Activated naive CD4-positive, alpha-beta T cell treated with anti-CD3 and anti-CD28 coated beads for 36 hours (primary cell): ENCODE measurements at regions of chr7 and their contacts with region 1.

Region 1: DNA sequence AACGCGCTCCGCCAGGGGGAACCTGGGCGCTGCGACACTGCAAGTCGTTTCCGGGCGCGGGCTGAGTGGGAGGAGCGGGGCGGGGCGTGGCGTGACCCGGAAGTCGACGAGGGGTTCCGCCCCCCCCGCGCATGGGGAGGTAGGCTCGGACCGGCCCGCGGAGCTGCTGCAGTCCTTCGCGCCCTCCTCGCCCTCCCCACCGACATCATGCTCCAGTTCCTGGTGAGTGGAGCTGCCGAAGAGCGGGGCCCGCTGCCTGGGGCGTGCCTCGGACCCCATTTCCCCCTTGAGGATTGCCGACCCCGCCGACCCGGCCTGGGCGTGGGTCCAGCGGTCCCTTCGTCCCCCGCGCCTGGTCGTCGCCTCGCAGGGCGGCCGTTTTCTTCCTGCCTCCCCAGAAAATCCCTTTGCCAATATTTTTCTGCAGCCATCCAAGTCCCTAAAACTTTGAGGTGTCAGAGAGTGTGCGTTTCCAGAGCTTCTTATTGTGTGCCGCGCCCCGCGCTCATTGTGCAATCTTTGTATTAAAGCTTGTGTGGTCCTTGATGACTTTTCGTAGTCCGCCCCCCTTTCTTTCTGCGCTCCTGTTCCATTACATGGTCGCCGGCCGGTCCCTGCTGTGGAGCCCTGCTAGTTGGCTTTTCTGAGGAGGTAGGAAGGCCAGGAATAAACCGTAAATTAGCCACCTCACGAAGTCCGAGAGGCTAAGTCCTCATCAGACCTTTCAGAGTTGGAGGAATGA is at the start of gene STMP1:
- DNase-seq: peak; percentile 97
- H3K4me3 Mint-ChIP-seq: peak within 1 kb of the TSS; percentile 98
- H3K27ac Mint-ChIP-seq: peak within 1 kb of the TSS; percentile 96
- H3K4me1 Mint-ChIP-seq: peaks cover 46% of the 10 kb centered on the region
- H3K27me3 Mint-ChIP-seq: no peaks in the 10 kb centered on the region
- total RNA-seq, gene STMP1: 21.5 to 21.6 TPM

Region 2: GRCh38 chr7:134992626-134993179 is 669.8 kb before region 1 on chr7:
- CTCF ChIA-PET with region 1: no interaction called
- intact Hi-C with region 1: loop called (anchors 10 kb)
- DNase-seq: peak; percentile 63
- H3K4me3 Mint-ChIP-seq: no peak overlapping the region
- H3K27ac Mint-ChIP-seq: peak overlapping the region; percentile 74
- H3K4me1 Mint-ChIP-seq: peaks cover 67% of the 10 kb centered on the region
- H3K27me3 Mint-ChIP-seq: no peaks in the 10 kb centered on the region

Region 3: GRCh38 chr7:135281363-135281949 is 381.1 kb before region 1 on chr7:
- CTCF ChIA-PET with region 1: no interaction called
- intact Hi-C with region 1: loop called (anchors 1 kb)
- DNase-seq: peak; percentile 93
- H3K4me3 Mint-ChIP-seq: no peak overlapping the region
- H3K27ac Mint-ChIP-seq: no peak overlapping the region
- H3K4me1 Mint-ChIP-seq: peaks cover 6% of the 10 kb centered on the region
- H3K27me3 Mint-ChIP-seq: peaks cover 5% of the 10 kb centered on the region

Region 4: GRCh38 chr7:135645296-135645904 is 17.1 kb before region 1 on chr7:
- CTCF ChIA-PET with region 1: interaction called, 29 read pairs
- intact Hi-C with region 1: no loop called
- DNase-seq: no peak
- H3K4me3 Mint-ChIP-seq: no peak overlapping the region
- H3K27ac Mint-ChIP-seq: no peak overlapping the region
- H3K4me1 Mint-ChIP-seq: no peaks in the 10 kb centered on the region
- H3K27me3 Mint-ChIP-seq: no peaks in the 10 kb centered on the region

Region 5: GRCh38 chr7:135685306-135686084 is 23.0 kb after region 1 on chr7:
- CTCF ChIA-PET with region 1: no interaction called
- intact Hi-C with region 1: no loop called
- DNase-seq: no peak
- H3K4me3 Mint-ChIP-seq: no peak overlapping the region
- H3K27ac Mint-ChIP-seq: no peak overlapping the region
- H3K4me1 Mint-ChIP-seq: peaks cover 4% of the 10 kb centered on the region
- H3K27me3 Mint-ChIP-seq: no peaks in the 10 kb centered on the region

Region 6: DNA sequence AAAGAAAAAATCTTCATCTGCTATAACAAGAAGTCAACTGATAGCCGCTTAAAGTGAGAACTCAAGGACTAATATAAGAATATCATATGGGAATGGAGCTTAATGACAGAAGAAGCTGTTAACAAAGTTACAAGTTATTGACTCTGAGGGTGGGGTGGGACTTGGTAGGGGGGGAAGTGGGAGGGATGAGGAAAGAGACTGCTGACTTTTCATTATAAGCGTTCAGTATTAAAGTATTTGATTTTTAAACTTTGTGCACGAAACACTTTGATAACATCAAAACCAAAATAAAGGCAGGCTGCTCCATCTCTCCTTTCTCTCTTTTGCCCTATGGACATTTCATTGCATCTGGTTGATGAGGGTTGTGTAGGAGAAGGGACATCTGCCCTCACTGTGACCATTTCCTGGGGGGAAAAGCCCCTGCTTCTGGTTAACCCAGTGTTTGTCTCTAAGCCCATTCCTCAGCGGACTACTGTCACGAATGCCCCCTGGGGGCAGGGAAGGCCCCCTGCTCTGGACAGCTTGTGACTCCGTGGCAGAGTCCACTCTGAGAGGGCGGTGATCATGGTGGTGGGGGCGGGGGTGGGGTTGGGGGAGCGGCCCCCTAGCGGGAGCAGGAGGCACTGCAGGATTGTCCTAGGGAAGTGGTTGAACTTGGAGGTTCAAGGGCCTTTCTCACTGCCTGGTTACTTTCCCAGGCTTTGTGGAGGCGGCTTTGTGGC is 48.0 kb after region 1 on chr7:
- CTCF ChIA-PET with region 1: no interaction called
- intact Hi-C with region 1: loop called (anchors 2 kb)
- DNase-seq: no peak
- H3K4me3 Mint-ChIP-seq: no peak overlapping the region
- H3K27ac Mint-ChIP-seq: no peak overlapping the region
- H3K4me1 Mint-ChIP-seq: no peaks in the 10 kb centered on the region
- H3K27me3 Mint-ChIP-seq: no peaks in the 10 kb centered on the region

Region 7: DNA sequence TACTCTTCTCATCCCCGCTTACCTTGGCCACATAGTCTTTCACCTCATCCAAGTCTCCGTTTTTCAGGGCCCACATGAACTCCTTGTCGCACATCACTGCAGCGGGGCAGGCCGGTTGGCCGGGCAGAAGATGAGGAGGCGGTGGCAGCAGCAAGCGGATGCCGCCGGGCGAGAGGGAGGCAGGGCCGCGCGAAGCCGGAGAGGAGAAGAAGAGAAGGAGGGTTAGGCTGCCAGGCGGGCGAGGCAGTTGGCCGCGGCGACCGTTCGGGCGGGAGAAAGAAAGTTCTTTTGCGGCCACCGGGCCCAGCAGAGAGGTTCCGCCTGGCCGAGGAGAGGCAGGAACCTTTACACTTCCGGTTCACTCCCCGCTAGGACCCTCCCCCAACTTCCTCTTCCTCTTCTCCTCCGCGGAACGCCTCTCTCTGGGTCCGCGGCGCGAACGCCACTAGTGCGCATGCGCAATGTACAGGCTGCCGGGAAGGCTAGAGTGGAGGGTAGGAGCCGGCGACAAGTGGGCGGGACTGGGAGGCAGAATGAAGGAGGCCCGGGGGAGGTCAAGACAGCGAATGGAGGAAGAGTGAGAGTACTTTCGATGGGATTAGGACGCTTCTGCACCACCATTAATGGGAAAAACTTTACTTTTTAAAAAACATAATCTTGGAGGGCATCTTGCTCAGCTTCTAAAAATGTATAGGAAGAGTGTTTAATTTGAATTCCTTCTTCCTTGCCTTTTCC is 314.6 kb after region 1 on chr7 and contains the start of gene MTPN:
- CTCF ChIA-PET with region 1: no interaction called
- intact Hi-C with region 1: loop called (anchors 1 kb)
- DNase-seq: peak; percentile 98
- H3K4me3 Mint-ChIP-seq: peak within 1 kb of the TSS; percentile 98
- H3K27ac Mint-ChIP-seq: peak within 1 kb of the TSS; percentile 86
- H3K4me1 Mint-ChIP-seq: peaks cover 71% of the 10 kb centered on the region
- H3K27me3 Mint-ChIP-seq: no peaks in the 10 kb centered on the region
- total RNA-seq, gene MTPN: 106 to 108 TPM

Region 8: GRCh38 chr7:136016649-136017395 is 354.3 kb after region 1 on chr7:
- CTCF ChIA-PET with region 1: no interaction called
- intact Hi-C with region 1: loop called (anchors 1 kb)
- DNase-seq: peak; percentile 10
- H3K4me3 Mint-ChIP-seq: no peak overlapping the region
- H3K27ac Mint-ChIP-seq: no peak overlapping the region
- H3K4me1 Mint-ChIP-seq: peaks cover 26% of the 10 kb centered on the region
- H3K27me3 Mint-ChIP-seq: peaks cover 26% of the 10 kb centered on the region